Caco-2 (cell line): ENCODE measurements at regions of chr2 and their contacts with region 1.

Region 1: DNA sequence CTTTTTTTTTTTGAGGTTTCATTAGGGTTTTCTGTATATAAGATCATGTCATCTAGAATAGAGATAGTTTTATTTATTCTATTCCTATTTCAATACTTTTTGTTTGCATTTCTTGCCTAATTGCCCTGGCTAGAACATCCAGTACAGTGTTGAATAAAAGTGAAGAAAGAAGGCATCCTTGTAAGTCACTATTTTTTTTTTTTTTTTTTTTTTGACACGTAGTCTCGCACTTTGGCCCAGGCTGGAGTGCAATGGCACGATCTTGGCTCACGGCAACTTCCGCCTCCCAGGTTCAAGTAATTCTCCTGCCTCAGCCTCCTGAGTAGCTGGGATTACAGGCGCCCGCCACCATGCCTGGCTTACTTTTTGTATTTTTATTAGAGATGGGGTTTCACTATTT is 27.8 kb upstream of the RANBP2 start:
- DNase-seq: no peak
- H3K4me3 ChIP-seq: no peak overlapping the region
- H3K4me3 Mint-ChIP-seq: no peak overlapping the region
- H3K27ac Mint-ChIP-seq: no peak overlapping the region
- H3K4me1 ChIP-seq: no peaks in the 10 kb centered on the region
- H3K4me1 Mint-ChIP-seq: no peaks in the 10 kb centered on the region
- H3K27me3 ChIP-seq: no peaks in the 10 kb centered on the region
- H3K27me3 Mint-ChIP-seq: no peaks in the 10 kb centered on the region
- CTCF ChIP-seq: no peak

Region 2: GRCh38 chr2:108460345-108461037 is 231.0 kb before region 1 on chr2:
- CTCF ChIA-PET with region 1: interaction called, 10 read pairs
- POLR2A ChIA-PET with region 1: no interaction called
- intact Hi-C with region 1: no loop called
- DNase-seq: no peak
- H3K4me3 ChIP-seq: no peak overlapping the region
- H3K4me3 Mint-ChIP-seq: no peak overlapping the region
- H3K27ac Mint-ChIP-seq: no peak overlapping the region
- H3K4me1 ChIP-seq: no peaks in the 10 kb centered on the region
- H3K4me1 Mint-ChIP-seq: no peaks in the 10 kb centered on the region
- H3K27me3 ChIP-seq: no peaks in the 10 kb centered on the region
- H3K27me3 Mint-ChIP-seq: no peaks in the 10 kb centered on the region
- CTCF ChIP-seq: no peak